ENCODE measurements at regions of chr18 and their contacts with region 1.

Region 1: GRCh38 chr18:27057519-27058234 is 127.4 kb downstream of the CHST9 start:
- DNase-seq: no peak
- ATAC-seq: no peak
- H3K4me3 Mint-ChIP-seq: no peak overlapping the region
- H3K27ac Mint-ChIP-seq: no peak overlapping the region
- H3K4me1 Mint-ChIP-seq: no peaks in the 10 kb centered on the region
- H3K27me3 Mint-ChIP-seq: no peaks in the 10 kb centered on the region

Region 2: DNA sequence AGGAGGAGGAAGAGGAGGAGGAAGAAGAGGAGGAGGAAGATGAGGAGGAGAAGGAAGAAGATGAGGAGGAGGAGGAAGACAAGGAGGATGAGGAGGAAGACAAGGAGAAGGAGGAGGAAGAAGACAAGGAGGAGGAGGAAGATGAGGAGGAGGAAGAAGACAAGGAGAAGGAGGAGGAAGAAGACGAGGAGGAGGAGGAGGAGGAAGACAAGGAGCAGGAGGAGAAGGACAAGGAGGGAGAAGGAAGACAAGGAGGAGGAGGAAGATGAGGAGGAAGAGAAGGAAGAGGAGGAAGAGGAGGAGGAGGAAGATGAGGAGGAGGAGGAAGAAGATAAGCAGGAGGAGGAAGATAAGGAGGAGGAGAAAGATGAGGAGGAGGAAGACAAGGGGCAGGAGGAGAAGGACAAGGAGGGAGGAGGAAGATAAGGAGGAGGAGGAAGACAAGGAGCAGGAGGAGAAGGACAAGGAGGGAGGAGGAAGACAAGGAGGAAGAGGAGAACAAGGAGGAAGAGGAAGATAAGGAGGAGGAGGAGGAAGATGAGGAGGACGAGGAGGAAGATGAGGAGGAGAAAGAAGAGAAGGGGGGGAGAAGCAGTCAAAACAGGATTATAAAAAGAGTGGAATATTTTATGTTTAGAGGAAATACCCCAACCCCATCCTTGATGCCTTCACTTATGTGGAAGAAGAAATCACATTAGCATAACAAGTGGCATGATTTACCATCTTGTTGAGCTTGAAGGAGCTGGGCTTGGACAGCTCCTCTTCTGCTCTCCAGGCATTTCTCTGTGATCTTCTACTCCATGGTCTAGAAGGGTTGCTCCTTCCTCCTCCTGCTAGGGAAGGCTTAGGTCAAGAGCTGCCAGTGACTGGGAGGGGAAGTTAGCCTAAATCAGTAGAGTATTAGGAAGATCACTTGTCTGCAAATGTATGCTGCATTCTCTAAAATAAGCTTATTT is 464.0 kb before region 1 on chr18:
- CTCF ChIA-PET with region 1: no interaction called
- POLR2A ChIA-PET with region 1: no interaction called
- intact Hi-C with region 1: no loop called
- DNase-seq: no peak
- ATAC-seq: no peak
- H3K4me3 Mint-ChIP-seq: no peak overlapping the region
- H3K27ac Mint-ChIP-seq: no peak overlapping the region
- H3K4me1 Mint-ChIP-seq: no peaks in the 10 kb centered on the region
- H3K27me3 Mint-ChIP-seq: peaks cover 13% of the 10 kb centered on the region

Region 3: GRCh38 chr18:26993568-26993967 is 64.1 kb before region 1 on chr18:
- CTCF ChIA-PET with region 1: no interaction called
- POLR2A ChIA-PET with region 1: no interaction called
- intact Hi-C with region 1: loop called (anchors 10 kb)
- DNase-seq: no peak
- ATAC-seq: no peak
- H3K4me3 Mint-ChIP-seq: no peak overlapping the region
- H3K27ac Mint-ChIP-seq: no peak overlapping the region
- H3K4me1 Mint-ChIP-seq: no peaks in the 10 kb centered on the region
- H3K27me3 Mint-ChIP-seq: no peaks in the 10 kb centered on the region

Region 4: GRCh38 chr18:27030416-27030815 is 27.3 kb before region 1 on chr18:
- CTCF ChIA-PET with region 1: no interaction called
- POLR2A ChIA-PET with region 1: no interaction called
- intact Hi-C with region 1: no loop called
- DNase-seq: no peak
- ATAC-seq: no peak
- H3K4me3 Mint-ChIP-seq: no peak overlapping the region
- H3K27ac Mint-ChIP-seq: no peak overlapping the region
- H3K4me1 Mint-ChIP-seq: no peaks in the 10 kb centered on the region
- H3K27me3 Mint-ChIP-seq: no peaks in the 10 kb centered on the region

Measured in activated CD4-positive, alpha-beta T cell treated with anti-CD3 and anti-CD28 coated beads for 36 hours (primary cell).